AG04449 (cell line): ENCODE measurements at regions of chr17 and their contacts with region 1.

Region 1: GRCh38 chr17:10683853-10684252 is 13.5 kb downstream of the SCO1 start:
- DNase-seq: no peak
- H3K4me3 ChIP-seq: no peak overlapping the region
- CTCF ChIP-seq: peak; percentile 27

Region 2: GRCh38 chr17:10697092-10698081 is 13.5 kb after region 1 on chr17 and contains the starts of genes ADPRM and SCO1:
- CTCF ChIA-PET with region 1: interaction called, 95 read pairs
- POLR2A ChIA-PET with region 1: no interaction called
- DNase-seq: peak; percentile 60
- H3K4me3 ChIP-seq: peak within 1 kb of the TSS; percentile 97
- CTCF ChIP-seq: peak; percentile 72

Region 3: GRCh38 chr17:10956821-10957220 is 273.0 kb after region 1 on chr17:
- CTCF ChIA-PET with region 1: no interaction called
- POLR2A ChIA-PET with region 1: no interaction called
- DNase-seq: no peak
- H3K4me3 ChIP-seq: no peak overlapping the region
- CTCF ChIP-seq: no peak